ENCODE measurements at regions of chr13 and their contacts with region 1.

Region 1: GRCh38 chr13:85806553-85807175 is 7.4 kb upstream of the SLITRK6 start:
- DNase-seq: peak in 1 of 2 experiments; percentile 60
- H3K4me3 ChIP-seq: no peak overlapping the region
- H3K4me1 ChIP-seq: peaks cover 3% of the 10 kb centered on the region; the same call in 1 of the 2 replicates
- H3K27me3 ChIP-seq: no peaks in the 10 kb centered on the region

Region 2: DNA sequence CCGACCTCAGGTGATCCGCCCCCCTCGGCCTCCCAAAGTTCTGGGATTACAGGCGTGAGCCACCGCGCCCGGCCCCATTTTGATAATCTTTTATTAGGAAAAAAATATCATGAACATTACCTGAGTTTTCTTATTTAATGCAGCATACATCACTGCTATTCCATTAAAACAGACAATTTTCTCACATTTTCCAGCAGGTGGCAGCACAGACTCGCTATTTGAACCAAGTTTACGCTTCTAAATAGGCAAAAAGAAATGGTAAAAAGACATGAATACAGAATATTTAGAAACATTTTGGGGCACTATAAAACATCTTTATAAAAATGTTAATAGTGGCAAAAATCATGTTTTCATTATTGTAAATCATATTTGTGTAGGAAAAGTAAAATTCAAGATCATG is 910.5 kb before region 1 on chr13:
- in situ Hi-C with region 1: loop called (anchors 10 kb)
- DNase-seq: peak; percentile 63 to 64
- H3K4me3 ChIP-seq: no peak overlapping the region
- H3K4me1 ChIP-seq: no peaks in the 10 kb centered on the region
- H3K27me3 ChIP-seq: no peaks in the 10 kb centered on the region